ENCODE measurements at regions of chr1 and their contacts with region 1.

Region 1: DNA sequence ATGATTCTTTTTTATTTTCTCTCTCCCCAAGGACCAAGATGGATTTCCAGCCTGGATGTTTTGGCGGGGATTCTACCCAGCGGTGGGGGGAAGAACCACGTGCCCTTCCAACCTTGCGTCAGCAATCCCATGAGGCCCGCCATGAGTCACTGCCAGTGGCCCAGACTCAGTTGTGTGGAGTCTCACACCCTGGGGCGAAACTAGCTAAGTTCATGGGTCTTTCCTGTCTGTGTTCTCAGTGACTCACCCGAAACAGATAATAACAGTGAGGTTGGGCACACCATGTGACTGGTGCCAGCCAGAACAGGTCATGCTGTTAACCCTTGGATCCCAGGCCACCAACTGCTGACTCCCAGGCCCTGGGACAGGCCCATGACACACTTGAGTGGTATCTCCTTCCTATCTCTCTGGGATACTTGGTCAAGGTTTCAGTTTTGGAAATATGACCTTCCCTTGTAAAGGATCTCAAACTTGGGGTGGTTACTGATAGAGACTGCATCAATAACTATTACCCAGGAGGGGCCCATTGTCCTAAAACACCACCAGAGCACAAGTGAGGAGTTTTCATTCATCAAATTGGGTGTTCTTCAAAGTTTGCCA is 98.0 kb upstream of the DUSP10 start:
- DNase-seq: peak; percentile 26
- ATAC-seq: peak; percentile 23; the same call in 1 of the 3 replicates
- H3K4me3 ChIP-seq: no peak overlapping the region
- H3K27ac ChIP-seq: no peak overlapping the region
- H3K4me1 ChIP-seq: no peaks in the 10 kb centered on the region
- H3K27me3 ChIP-seq: no peaks in the 10 kb centered on the region
- CTCF ChIP-seq: no peak
- EP300 ChIP-seq: no peak; a peak in 1 of 4 replicates
- POLR2A ChIP-seq: no peak
- RAD21 ChIP-seq: no peak

Region 2: DNA sequence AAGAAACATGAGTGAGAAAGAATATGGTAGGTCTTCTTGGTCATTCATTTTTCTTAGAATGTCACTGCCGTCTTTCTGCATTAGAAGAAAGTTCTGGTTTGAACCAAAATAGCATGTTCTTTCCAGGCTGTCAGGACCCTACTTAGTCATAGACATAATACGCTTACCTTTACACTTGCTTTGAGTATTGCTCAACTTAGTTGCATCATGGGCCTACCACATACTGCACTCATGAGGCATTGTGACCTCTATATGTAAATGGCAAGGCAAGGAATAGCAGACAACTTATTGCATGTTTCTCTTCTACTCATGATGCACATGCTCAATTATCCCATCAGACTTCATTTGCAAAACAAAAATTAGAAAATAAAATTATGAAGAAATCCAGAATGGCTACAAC is 545.7 kb before region 1 on chr1:
- CTCF ChIA-PET with region 1: no interaction called
- POLR2A ChIA-PET with region 1: no interaction called
- in situ Hi-C with region 1: no loop called
- intact Hi-C with region 1: loop called (anchors 10 kb)
- DNase-seq: no peak
- ATAC-seq: no peak; the same call in 2 of the 3 replicates
- H3K4me3 ChIP-seq: no peak overlapping the region
- H3K27ac ChIP-seq: no peak overlapping the region
- H3K4me1 ChIP-seq: no peaks in the 10 kb centered on the region
- H3K27me3 ChIP-seq: no peaks in the 10 kb centered on the region
- CTCF ChIP-seq: no peak
- EP300 ChIP-seq: no peak
- POLR2A ChIP-seq: no peak
- RAD21 ChIP-seq: no peak

Measured in HepG2 (cell line).